ENCODE measurements at regions of chr19 and their contacts with region 1.

Region 1: DNA sequence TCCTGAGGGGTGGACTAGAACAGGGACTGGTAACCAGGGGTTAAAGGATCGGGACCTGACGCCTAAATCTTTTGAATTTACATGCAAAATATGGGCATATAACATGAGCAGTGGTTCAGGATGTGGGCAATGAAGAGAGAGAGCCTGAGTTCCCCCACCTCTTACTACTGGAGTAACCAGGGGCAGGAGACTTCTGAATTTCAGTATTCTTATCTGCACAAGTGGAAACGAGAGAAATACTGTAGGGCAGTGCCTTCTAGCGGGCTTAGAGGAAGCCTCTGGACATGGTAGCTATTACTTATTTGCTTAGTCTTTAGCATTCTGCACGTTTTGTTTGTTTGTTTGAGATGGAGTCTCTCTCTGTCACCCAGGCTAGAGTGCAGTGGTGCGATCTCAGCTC is 26.3 kb downstream of the BCAT2 start:
- DNase-seq: no peak
- H3K27ac ChIP-seq: no peak overlapping the region
- CTCF ChIP-seq: no peak

Region 2: GRCh38 chr19:48835734-48836088 is 51.2 kb after region 1 on chr19:
- CTCF ChIA-PET with region 1: interaction called, 58 read pairs
- POLR2A ChIA-PET with region 1: interaction called, 4 read pairs
- DNase-seq: peak; percentile 82
- H3K27ac ChIP-seq: peak overlapping the region; percentile 66
- CTCF ChIP-seq: peak; percentile 87

Region 3: DNA sequence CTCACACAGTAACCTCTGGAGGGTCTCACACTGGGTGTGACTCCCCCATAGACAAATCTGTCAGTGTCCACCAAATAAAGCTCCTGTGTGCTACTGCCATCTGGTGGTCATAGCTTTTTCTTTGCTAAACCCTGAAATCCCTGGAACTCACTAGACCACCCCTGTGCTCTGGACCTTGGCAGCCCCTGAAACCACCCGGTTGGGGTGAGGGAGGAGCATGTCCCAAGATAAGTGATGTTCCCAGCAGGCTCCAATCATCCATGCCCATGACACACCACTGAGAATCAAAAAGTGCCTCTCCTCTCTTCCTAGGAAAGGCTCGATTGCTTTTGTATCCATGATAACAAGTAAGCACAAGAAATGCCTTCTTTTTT is 58.2 kb after region 1 on chr19:
- CTCF ChIA-PET with region 1: interaction called, 58 read pairs
- POLR2A ChIA-PET with region 1: no interaction called
- DNase-seq: peak; percentile 36
- H3K27ac ChIP-seq: peak overlapping the region; percentile 5; the same call in 1 of the 2 replicates
- CTCF ChIP-seq: peak; percentile 86

Measured in RWPE1 (cell line).